MCF 10A (cell line): ENCODE measurements at regions of chr3 and their contacts with region 1.

Region 1: GRCh38 chr3:129316131-129317013 is 37.7 kb downstream of the HMCES start:
- DNase-seq: peak; percentile 82
- H3K4me3 Mint-ChIP-seq: peak overlapping the region; percentile 81
- H3K27ac Mint-ChIP-seq: peak overlapping the region; percentile 87
- H3K4me1 Mint-ChIP-seq: peaks cover 6% of the 10 kb centered on the region
- H3K27me3 Mint-ChIP-seq: no peaks in the 10 kb centered on the region
- CTCF ChIP-seq: peak; percentile 49

Region 2: DNA sequence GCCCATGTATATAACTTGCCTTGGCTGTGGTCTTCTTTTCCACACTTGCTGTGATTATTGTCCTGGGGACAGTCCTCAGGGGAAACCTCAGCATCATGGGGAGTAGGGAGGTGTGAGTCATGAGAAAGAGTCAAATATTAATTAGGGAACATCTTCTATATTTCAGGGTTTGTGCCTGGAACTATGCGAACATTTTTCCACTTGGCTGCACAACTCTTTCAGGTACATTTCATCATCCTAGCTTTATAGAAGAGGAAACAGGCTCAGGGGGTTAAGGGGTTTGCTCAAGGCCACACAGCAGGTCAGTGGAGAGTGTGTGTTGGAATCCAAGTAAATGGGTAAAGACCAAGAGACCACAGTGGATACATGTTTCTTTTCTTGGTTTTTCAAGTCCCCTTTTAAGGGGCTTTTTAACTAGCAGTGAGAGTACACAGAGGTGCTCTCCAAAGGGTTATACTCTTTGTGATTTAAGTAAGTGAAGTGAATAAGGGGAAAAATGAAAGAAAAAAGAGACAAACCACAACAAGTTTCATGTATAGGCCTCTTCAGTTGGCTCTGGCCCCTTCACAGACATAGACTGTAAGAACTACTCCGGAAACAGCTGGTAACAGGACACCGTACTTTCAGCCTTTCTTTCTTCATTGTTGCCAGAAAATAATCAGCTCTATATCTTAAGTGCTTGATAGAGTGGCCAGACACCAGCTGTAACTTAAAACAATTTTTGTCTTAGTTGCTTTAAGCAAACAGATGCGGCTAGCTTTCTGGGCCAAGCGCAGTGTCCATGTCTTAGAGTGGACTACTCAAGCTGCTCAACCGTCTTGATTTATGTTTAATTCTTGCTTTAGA is 1098.4 kb before region 1 on chr3:
- CTCF ChIA-PET with region 1: no interaction called
- POLR2A ChIA-PET with region 1: no interaction called
- intact Hi-C with region 1: no loop called
- DNase-seq: no peak
- H3K4me3 Mint-ChIP-seq: no peak overlapping the region
- H3K27ac Mint-ChIP-seq: peak overlapping the region; percentile 83
- H3K4me1 Mint-ChIP-seq: peaks cover 8% of the 10 kb centered on the region
- H3K27me3 Mint-ChIP-seq: no peaks in the 10 kb centered on the region
- CTCF ChIP-seq: no peak

Region 3: GRCh38 chr3:129278439-129278970 is 37.9 kb before region 1 on chr3 and contains the start of gene HMCES:
- CTCF ChIA-PET with region 1: interaction called, 7 read pairs
- POLR2A ChIA-PET with region 1: interaction called, 56 read pairs
- intact Hi-C with region 1: loop called (anchors 2 kb)
- DNase-seq: peak; percentile 91
- H3K4me3 Mint-ChIP-seq: peak within 1 kb of the TSS; percentile 97
- H3K27ac Mint-ChIP-seq: peak within 1 kb of the TSS; percentile 90
- H3K4me1 Mint-ChIP-seq: peaks cover 10% of the 10 kb centered on the region
- H3K27me3 Mint-ChIP-seq: no peaks in the 10 kb centered on the region
- CTCF ChIP-seq: no peak
- total RNA-seq, gene HMCES: 29.4 and 42.8 TPM in 2 replicates

Region 4: GRCh38 chr3:129305592-129306091 is 10.7 kb before region 1 on chr3:
- CTCF ChIA-PET with region 1: interaction called, 4 read pairs
- POLR2A ChIA-PET with region 1: interaction called, 18 read pairs
- intact Hi-C with region 1: no loop called
- DNase-seq: no peak
- H3K4me3 Mint-ChIP-seq: no peak overlapping the region
- H3K27ac Mint-ChIP-seq: no peak overlapping the region
- H3K4me1 Mint-ChIP-seq: peaks cover 4% of the 10 kb centered on the region
- H3K27me3 Mint-ChIP-seq: no peaks in the 10 kb centered on the region
- CTCF ChIP-seq: no peak

Region 5: GRCh38 chr3:129399145-129399894 is 82.9 kb after region 1 on chr3:
- CTCF ChIA-PET with region 1: interaction called, 5 read pairs
- POLR2A ChIA-PET with region 1: interaction called, 16 read pairs
- intact Hi-C with region 1: no loop called
- DNase-seq: peak; percentile 97
- H3K4me3 Mint-ChIP-seq: peak overlapping the region; percentile 88
- H3K27ac Mint-ChIP-seq: peak overlapping the region; percentile 97
- H3K4me1 Mint-ChIP-seq: peaks cover 30% of the 10 kb centered on the region
- H3K27me3 Mint-ChIP-seq: no peaks in the 10 kb centered on the region
- CTCF ChIP-seq: peak; percentile 57

Region 6: DNA sequence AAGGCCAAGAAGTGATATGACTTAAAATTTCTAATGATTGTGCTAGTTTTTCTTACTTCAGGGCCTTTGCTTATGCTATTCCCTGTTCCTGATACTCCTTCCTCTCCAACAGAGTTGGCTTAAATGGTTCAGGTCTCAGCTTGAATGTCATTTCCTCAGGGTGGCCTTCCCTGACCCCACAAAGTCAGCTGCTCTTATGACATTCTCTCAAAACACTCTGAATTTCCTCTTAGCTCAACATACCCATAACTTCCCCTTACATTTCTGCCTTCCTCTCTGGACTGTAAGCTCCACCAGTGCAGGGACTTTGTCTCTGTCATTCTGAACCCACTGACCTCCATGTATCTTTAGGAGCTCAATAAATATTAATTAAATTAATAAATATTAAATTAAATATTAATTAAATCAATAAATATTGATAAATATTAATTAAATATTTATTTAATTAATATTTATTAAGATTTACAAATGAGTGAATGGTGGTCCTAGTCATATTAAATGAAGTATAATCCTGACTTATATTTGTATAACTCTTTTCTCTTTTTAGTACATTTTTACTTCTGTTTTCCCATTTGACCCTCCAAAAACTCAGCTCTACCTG is 595.0 kb after region 1 on chr3:
- CTCF ChIA-PET with region 1: no interaction called
- POLR2A ChIA-PET with region 1: no interaction called
- intact Hi-C with region 1: no loop called
- DNase-seq: no peak
- H3K4me3 Mint-ChIP-seq: no peak overlapping the region
- H3K27ac Mint-ChIP-seq: no peak overlapping the region
- H3K4me1 Mint-ChIP-seq: no peaks in the 10 kb centered on the region
- H3K27me3 Mint-ChIP-seq: no peaks in the 10 kb centered on the region
- CTCF ChIP-seq: no peak